Heart left ventricle (tissue), 16 donors: ENCODE measurements at regions of chr4 and their contacts with region 1.

Region 1: DNA sequence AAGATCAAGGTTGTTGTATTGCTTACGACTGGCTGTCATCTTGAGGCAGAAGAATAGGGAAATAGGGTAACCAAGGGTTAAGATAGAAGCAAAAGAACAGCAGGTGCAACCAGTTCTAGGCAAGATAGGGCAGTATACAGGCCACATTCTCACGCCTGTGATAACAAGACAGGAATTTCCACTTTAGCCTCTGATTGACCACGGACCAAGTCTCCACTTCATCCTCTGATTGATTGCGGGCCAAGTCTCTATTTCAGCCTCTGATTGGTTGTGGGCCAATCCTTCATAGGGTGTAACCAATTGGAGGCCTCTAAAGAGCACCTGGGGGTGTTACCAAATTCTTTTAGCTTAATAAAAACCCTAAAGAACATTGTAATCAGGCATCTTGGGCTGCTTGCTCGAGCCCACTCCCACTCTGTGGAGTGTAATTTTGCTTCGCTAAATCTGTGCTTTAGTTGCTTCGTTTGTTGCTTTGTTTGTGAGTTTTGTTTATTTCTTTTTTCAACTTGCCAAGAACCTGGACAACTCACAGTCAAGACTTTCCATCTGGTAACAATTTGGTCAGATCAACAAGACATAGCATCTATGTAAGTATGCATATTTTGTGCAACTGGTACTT is 8.7 kb upstream of the TBC1D9 start:
- DNase-seq: no peak
- ATAC-seq: peak in 1 of 4 donors; percentile 42
- H3K4me3 ChIP-seq: no peak overlapping the region
- H3K27ac ChIP-seq: no peak overlapping the region
- H3K4me1 ChIP-seq: peaks cover 0 to 7% (median 0%) of the 10 kb centered on the region in 12 donors
- H3K27me3 ChIP-seq: no peaks in the 10 kb centered on the region
- CTCF ChIP-seq: no peak
- POLR2A ChIP-seq: no peak

Region 2: DNA sequence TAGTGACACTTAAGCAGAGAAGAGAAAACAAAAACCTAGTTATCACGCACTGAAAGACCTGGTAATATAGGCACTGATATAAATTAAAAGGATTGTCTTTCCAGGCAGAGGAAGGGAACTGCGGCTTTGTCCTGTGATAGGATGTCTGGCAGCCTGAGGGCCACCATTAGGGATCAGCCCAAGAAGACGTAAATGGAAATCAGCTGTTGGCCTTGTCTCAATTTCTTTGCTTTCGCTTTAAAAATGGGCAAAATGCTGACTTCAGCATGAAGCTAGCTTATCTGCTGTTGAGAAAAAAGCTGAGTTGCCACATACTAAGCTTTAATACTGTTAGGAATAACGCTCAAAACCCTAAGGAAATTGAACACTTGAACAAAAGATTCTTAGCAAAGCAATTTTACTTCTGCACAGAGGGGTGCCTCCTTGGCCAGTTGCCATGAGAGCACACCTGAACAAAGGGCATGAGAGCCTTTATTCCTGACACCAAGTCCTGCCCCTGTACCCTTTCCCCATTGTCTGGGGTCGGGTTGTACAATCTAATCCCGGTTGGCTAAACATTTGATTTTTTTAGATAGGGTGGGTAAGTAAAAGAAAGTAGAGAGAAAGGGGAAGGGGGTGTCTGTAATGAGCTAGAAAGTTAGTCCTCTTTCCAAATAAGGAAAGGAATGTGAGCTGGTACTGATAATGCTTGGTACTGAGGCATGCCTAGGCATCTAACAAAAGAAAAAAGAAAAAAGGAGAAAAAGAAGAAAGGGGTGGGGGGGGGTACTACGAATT is 111.0 kb before region 1 on chr4:
- intact Hi-C with region 1: no loop called
- DNase-seq: no peak
- ATAC-seq: peak in 2 of 4 donors; percentile 43 to 64
- H3K4me3 ChIP-seq: peak overlapping the region in 4 of 12 donors; percentile 7 to 32 (median 12)
- H3K27ac ChIP-seq: no peak overlapping the region
- H3K4me1 ChIP-seq: peaks cover 0 to 9% (median 2%) of the 10 kb centered on the region in 12 donors
- H3K27me3 ChIP-seq: no peaks in the 10 kb centered on the region
- CTCF ChIP-seq: no peak
- POLR2A ChIP-seq: no peak

Region 3: DNA sequence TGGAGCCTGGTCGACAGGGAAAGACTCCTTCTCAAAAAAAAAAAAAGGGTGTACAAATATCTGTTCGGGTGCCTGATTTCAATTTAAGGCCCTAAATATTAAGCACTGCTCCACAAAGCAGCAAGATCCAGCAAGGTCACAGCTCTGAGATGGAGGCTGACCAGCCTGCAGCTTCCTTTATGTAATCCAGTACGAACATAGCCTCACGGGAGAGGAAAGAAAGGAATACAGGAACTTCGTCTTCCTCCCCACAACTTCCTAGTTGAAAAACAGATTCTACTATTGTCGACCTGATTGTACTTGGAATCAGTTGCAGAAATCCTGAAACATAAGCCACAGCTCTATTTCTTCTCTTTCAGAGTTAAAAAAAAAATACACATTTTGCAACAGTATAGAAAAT is 44.8 kb after region 1 on chr4:
- intact Hi-C with region 1: loop called in 1 of 10 experiments (anchors 10 kb)
- DNase-seq: no peak
- ATAC-seq: peak in 2 of 4 donors; percentile 31 to 53
- H3K4me3 ChIP-seq: no peak overlapping the region
- H3K27ac ChIP-seq: peak overlapping the region in 3 of 12 donors; percentile 30 to 82 (median 37)
- H3K4me1 ChIP-seq: peaks cover 0 to 41% (median 0%) of the 10 kb centered on the region in 12 donors
- H3K27me3 ChIP-seq: no peaks in the 10 kb centered on the region
- CTCF ChIP-seq: no peak
- POLR2A ChIP-seq: no peak

Region 4: DNA sequence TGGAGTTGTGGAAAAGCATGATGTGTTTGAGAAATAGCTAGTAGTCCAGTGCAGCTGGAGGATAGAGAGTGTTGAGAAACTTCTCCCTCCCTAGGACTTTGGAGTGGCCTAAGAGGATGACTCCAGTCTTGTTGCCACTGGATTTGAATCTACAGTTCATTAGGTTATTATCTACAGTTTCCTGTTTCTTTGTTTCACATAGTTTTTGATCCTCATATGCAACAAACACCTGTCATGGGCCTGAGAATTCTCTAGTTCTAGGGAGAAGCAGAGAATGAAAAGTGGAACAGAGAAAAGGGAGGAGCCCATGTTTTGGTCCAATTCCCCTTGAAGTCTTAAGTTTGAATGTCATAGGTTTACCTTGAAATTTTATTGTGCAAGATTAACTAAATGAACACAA is 64.9 kb after region 1 on chr4:
- intact Hi-C with region 1: loop called in 2 of 10 experiments (anchors 10 kb)
- DNase-seq: no peak
- ATAC-seq: no peak
- H3K4me3 ChIP-seq: no peak overlapping the region
- H3K27ac ChIP-seq: no peak overlapping the region
- H3K4me1 ChIP-seq: no peaks in the 10 kb centered on the region
- H3K27me3 ChIP-seq: peaks cover 0 to 3% (median 0%) of the 10 kb centered on the region in 9 donors
- CTCF ChIP-seq: no peak
- POLR2A ChIP-seq: no peak

Region 5: GRCh38 chr4:140839888-140840790 is 75.3 kb after region 1 on chr4:
- intact Hi-C with region 1: loop called in 3 of 10 experiments (anchors 10 kb)
- DNase-seq: peak in 1 of 5 donors; percentile 25
- ATAC-seq: peak in 1 of 4 donors; percentile 44
- H3K4me3 ChIP-seq: no peak overlapping the region
- H3K27ac ChIP-seq: peak overlapping the region in 4 of 12 donors; percentile 1 to 48 (median 24)
- H3K4me1 ChIP-seq: peaks cover 0 to 14% (median 4%) of the 10 kb centered on the region in 12 donors
- H3K27me3 ChIP-seq: no peaks in the 10 kb centered on the region
- CTCF ChIP-seq: no peak
- POLR2A ChIP-seq: no peak